ENCODE measurements at regions of chr6 and their contacts with region 1.

Region 1: GRCh38 chr6:27472617-27473400 is at the start of gene ZNF184:
- DNase-seq: peak; percentile 65 to 93 (median 86)
- ATAC-seq: peak; percentile 74 to 79
- H3K4me3 Mint-ChIP-seq: peak within 1 kb of the TSS; percentile 79 to 99 (median 98)
- H3K27ac Mint-ChIP-seq: peak within 1 kb of the TSS; percentile 93 to 100 (median 98)
- H3K4me1 Mint-ChIP-seq: peaks cover 28 to 62% (median 43%) of the 10 kb centered on the region in 4 donors
- H3K27me3 Mint-ChIP-seq: no peaks in the 10 kb centered on the region
- polyA plus RNA-seq, gene ZNF184: 3.8 to 7.8 (median 7.8) TPM

Region 2: DNA sequence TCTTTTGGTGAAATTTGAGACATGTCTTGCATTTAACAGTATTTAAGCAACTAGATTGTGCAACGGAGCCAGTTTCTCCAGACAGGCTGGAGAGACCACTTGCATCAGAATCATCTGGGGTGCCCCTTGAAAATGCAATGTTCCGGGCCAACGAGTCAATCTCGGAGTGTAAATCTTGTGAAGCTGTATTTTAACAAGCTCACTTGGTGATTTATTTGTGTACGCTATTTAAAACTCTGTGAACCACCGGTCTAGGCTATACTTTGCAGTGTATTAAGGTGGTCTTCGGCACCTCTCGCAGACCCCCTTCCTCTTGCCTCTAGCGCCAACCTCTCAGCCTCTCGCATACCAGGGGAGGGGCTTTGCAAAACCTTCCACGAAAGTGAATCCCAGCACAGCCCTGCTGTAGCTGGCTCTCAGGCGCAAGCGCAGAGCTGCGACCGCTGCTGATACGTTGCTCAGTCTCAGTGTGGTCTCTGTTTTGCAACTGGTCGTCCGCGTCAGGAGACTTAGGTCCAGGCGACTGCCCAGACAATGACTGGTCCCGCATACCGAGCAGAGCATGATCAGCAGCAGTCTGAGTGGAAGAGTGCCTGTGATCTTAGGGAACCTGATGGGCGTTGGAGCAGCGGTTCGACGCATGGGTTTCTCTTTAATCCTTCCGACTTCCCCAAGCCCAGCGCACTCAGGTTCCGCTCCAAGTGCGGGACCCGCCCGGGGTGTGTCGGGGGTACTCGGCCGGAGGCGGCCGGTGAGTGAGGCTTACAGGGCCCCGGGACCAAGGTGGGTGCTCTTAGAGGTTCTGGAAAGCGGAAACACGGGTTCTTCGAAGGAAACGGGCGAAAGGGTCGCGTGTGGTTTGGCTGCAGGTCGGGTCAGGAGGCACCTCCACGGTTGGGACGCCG is 84.3 kb before region 1 on chr6 and contains the start of gene ZNF391:
- POLR2A ChIA-PET with region 1: interaction called, 14 read pairs
- DNase-seq: peak; percentile 37 to 80 (median 66)
- ATAC-seq: peak; percentile 90 to 91
- H3K4me3 Mint-ChIP-seq: peak within 1 kb of the TSS; percentile 94 to 99 (median 98)
- H3K27ac Mint-ChIP-seq: peak within 1 kb of the TSS; percentile 92 to 99 (median 96)
- H3K4me1 Mint-ChIP-seq: peaks cover 14 to 25% (median 18%) of the 10 kb centered on the region in 4 donors
- H3K27me3 Mint-ChIP-seq: no peaks in the 10 kb centered on the region
- polyA plus RNA-seq, gene ZNF391: 2.0 to 5.1 (median 3.4) TPM

Region 3: DNA sequence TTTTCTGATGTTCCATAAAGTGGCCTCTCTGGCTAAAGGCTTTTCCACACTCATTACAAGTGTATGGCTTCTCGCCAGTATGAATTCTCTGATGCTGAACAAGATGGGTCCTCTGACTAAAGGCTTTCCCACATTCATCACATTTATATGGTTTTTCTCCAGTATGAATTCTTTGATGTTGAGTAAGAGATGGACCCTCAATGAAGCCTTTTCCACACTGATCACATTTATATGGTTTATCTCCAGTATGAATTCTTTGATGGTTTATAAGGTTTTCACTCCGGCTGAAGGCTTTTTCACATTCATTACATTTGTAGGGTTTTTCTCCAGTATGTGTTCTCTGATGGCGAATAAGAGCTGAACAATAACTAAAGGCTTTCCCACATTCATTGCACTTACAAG is 20.3 kb before region 1 on chr6:
- POLR2A ChIA-PET with region 1: no interaction called
- DNase-seq: no peak
- ATAC-seq: no peak
- H3K4me3 Mint-ChIP-seq: no peak overlapping the region
- H3K27ac Mint-ChIP-seq: no peak overlapping the region
- H3K4me1 Mint-ChIP-seq: no peaks in the 10 kb centered on the region
- H3K27me3 Mint-ChIP-seq: no peaks in the 10 kb centered on the region